HepG2 (cell line): ENCODE measurements at regions of chr15 and their contacts with region 1.

Region 1: DNA sequence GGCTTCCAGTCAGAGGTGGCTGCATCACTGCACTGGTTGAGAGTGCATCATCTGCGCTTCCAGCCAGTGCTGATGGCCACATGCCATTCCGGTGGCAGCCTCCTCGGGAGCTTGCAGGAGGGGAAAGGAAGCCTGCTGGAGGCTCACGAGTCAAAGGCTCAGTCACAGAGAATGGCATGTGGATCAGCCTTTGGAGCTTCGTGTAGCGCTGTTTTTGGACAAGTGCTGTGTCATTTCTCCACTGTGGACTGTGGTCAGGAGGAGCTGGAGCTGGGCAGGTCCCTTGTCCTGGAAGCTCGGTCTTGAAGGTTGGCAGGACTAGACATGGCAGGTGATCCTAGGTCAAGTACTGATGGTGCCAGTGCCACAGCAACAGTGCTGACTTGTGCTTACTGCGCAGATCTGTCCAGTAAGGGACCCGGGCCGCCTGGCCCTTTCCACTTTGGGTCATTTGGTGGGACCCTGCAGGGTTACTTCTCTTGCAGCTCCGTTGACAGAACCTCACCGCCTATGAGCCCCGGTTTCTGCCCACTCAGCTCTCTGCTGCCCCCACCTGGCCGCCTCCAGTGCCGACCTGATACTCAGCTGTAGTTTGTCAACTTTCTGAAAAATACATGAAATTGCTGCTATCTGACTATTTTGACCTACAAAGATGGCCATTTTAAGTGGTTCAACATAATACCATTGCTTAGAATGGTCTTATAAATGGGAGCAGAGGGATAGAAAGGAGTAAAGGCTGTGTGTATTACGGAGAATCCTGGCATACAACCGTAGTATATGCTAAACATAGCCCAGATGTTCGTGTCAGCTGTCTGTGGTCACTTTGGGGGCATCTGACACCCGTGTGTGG is 27.6 kb upstream of the TRPM1 start:
- DNase-seq: peak; percentile 18
- ATAC-seq: peak; percentile 89
- H3K4me3 ChIP-seq: peak overlapping the region in 1 of 3 experiments; percentile 49; a peak in 1 of 6 replicates
- H3K27ac ChIP-seq: no peak overlapping the region
- H3K4me1 ChIP-seq: peaks cover 31% of the 10 kb centered on the region
- H3K27me3 ChIP-seq: peaks cover 0 to 1% of the 10 kb centered on the region in 2 experiments; a peak in 1 of 5 replicates
- CTCF ChIP-seq: peak; percentile 90
- EP300 ChIP-seq: no peak
- POLR2A ChIP-seq: no peak
- RAD21 ChIP-seq: peak; percentile 81

Region 2: DNA sequence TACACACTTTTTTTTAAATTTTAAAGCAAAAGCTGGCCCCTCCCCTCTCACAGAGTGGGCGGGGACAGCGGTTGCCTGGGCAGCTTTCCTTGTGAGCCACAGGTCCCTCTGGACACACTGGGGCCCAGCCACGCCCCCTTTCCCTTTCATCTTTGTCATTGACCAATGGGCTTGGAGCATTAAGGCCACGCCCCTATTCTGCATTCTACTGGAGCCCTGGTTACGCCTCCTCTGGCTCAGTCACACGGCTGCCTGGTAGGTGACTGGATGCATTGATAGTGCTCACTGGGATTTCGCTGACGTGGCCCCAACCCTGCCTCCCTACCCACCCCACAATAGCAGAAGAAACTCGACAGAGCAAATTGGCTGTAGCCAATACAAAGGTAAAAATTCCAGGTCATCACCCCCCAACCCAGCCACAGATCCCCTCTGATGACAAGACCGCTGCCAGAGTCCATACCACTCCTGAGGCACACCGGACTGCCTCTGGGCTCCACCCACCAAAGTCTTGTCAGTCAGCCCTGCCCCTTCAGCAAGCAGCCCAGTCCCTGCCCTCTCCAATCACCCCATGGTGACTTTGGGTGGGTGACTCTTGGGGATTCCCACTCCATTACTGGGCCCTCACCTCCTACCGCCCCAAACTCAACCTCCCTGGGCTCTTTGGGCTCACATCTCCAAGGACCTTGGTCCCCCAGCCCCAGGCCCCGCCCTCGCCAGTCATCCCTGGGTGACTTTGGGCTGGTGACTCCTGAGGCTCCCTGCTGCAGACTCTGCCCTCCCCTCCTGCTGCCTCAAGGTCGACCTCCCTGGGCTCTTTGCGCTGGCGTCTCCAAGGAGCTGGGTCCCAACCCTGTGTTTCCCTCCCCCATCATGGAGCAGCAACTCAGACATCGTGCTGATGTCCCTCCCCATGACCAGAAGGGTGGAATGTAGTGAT is 337.6 kb before region 1 on chr15:
- CTCF ChIA-PET with region 1: no interaction called
- POLR2A ChIA-PET with region 1: no interaction called
- in situ Hi-C with region 1: loop called (anchors 10 kb)
- intact Hi-C with region 1: no loop called
- DNase-seq: no peak
- ATAC-seq: no peak
- H3K4me3 ChIP-seq: no peak overlapping the region
- H3K27ac ChIP-seq: no peak overlapping the region
- H3K4me1 ChIP-seq: no peaks in the 10 kb centered on the region
- H3K27me3 ChIP-seq: no peaks in the 10 kb centered on the region
- CTCF ChIP-seq: no peak
- EP300 ChIP-seq: no peak
- POLR2A ChIP-seq: no peak
- RAD21 ChIP-seq: no peak

Region 3: GRCh38 chr15:30895461-30896210 is 233.5 kb before region 1 on chr15:
- CTCF ChIA-PET with region 1: no interaction called
- POLR2A ChIA-PET with region 1: no interaction called
- in situ Hi-C with region 1: no loop called
- intact Hi-C with region 1: loop called (anchors 2 kb)
- DNase-seq: no peak
- ATAC-seq: no peak
- H3K4me3 ChIP-seq: no peak overlapping the region
- H3K27ac ChIP-seq: no peak overlapping the region
- H3K4me1 ChIP-seq: no peaks in the 10 kb centered on the region
- H3K27me3 ChIP-seq: no peaks in the 10 kb centered on the region
- CTCF ChIP-seq: no peak
- EP300 ChIP-seq: no peak
- POLR2A ChIP-seq: no peak
- RAD21 ChIP-seq: no peak

Region 4: DNA sequence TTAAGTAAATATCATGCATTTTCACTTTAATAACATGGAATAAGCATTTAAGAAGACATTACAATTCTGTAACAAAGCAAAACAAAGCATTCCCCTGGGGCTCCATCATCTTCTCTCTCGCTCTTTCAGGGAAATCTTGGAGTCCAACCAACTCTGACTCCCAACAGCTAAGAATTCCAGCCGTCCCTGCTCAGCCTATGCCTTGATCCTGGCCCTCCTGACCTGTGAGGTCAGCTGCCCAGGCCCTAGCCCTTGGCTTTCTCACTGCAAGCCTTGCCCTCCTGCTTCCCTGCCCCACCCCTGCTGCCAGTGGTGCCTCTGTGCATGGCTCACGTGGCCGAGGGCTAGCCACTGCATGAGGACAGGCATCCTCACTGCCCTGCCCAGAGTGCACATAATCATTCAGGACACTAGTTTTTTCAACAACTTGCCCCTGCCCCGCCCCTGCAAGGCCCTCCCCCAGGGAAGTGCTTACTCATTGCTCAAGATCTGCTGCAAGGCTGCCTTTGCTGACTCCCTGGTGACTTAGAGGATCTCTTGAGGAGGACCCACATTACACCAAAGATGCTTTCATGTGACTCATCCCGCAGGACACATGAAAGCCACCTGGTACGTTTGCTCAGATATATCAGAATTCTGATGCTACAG is 175.3 kb before region 1 on chr15:
- CTCF ChIA-PET with region 1: no interaction called
- POLR2A ChIA-PET with region 1: no interaction called
- in situ Hi-C with region 1: no loop called
- intact Hi-C with region 1: loop called (anchors 5 kb)
- DNase-seq: no peak
- ATAC-seq: no peak
- H3K4me3 ChIP-seq: no peak overlapping the region
- H3K27ac ChIP-seq: no peak overlapping the region
- H3K4me1 ChIP-seq: no peaks in the 10 kb centered on the region
- H3K27me3 ChIP-seq: no peaks in the 10 kb centered on the region
- CTCF ChIP-seq: no peak
- EP300 ChIP-seq: no peak
- POLR2A ChIP-seq: no peak
- RAD21 ChIP-seq: no peak

Region 5: DNA sequence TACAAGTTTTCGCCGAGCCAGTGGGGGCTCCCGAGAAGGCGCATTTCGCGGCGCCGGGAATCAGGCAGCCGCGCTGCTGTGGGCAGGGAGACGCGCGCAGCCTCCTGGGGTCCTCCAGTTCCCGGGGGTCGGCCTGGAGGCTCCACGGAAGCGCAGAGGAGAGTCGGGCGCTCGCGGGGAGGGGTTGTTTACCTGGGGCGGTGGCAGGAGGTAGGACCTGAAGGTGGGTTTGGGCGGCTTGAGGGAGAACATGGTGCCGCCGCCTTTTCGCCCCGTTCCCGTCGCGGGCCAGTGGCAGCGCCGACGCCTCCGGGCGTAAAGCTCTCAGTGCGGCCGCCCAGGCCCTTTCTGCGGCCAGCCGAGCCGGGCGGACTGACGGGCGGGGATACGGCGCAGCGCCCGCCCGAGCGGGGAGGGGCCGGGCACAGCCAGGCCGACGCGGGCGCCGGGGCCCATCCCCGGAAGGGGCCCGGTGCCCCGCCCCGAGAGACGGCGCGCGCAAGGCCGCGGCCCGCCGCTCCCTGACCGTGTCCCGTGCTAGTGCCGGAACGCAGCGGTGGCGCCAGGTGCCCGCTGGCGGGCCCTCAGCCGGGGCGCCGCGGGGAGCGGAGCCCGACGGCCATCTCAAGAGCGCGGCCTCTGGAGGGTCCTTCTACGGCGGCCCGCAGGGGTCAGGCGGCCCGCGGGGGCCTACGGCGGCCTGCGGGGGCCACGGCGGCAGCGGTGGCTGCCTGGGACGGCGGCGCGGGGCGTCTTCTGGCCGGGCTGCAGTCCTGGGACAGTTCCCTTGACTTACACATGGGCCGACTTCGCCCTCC is 137.7 kb before region 1 on chr15 and contains the start of gene MTMR10:
- CTCF ChIA-PET with region 1: no interaction called
- POLR2A ChIA-PET with region 1: interaction called, 11 read pairs
- in situ Hi-C with region 1: loop called (anchors 25 kb)
- intact Hi-C with region 1: loop called (anchors 10 kb)
- DNase-seq: peak; percentile 48
- ATAC-seq: peak; percentile 90
- H3K4me3 ChIP-seq: peak within 1 kb of the TSS; percentile 93 to 98 (median 97)
- H3K27ac ChIP-seq: peak within 1 kb of the TSS; percentile 89
- H3K4me1 ChIP-seq: peaks cover 41% of the 10 kb centered on the region
- H3K27me3 ChIP-seq: no peaks in the 10 kb centered on the region; a peak in 1 of 5 replicates
- CTCF ChIP-seq: no peak
- EP300 ChIP-seq: 0 out of 4 replicates have a peak, but pooled peaks of 1 of the 2 experiments have one; percentile 6
- POLR2A ChIP-seq: peak; percentile 86 to 87
- RAD21 ChIP-seq: peak; percentile 28; the same call in 1 of the 2 replicates
- total RNA-seq, gene MTMR10: 17.4 and 18.6 TPM in 2 replicates

Region 6: DNA sequence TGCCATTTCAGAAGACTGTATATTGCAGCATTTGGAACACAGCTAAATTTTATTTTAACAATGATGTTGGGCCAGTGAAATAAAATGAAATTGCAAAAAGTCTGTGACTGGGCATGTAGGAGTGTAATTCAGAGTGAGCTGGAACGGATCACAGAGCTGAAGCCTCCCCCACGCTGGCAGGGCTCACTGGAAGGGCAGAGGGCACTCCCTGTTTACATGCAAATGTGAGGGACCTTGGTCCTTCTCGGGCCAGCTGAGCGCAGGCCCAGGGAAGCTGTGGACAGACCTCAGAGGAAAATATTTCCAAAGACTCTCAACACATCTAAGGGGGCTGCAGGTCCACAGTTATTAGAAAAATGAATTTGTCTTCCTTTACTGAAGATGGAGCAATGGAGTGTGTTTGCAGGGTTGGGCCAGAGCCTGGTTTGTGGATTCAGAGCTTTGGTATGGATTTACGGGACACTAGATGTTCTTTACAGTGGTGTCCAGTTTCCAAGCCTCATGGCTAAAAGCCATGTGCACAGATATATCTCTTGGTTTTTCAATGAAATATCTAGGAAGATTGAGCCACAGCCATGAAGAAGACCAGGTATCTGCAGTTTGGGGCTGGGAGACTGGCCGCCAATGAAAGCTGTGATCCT is 59.7 kb before region 1 on chr15:
- CTCF ChIA-PET with region 1: no interaction called
- POLR2A ChIA-PET with region 1: no interaction called
- in situ Hi-C with region 1: no loop called
- intact Hi-C with region 1: loop called (anchors 2 kb)
- DNase-seq: peak; percentile 11
- ATAC-seq: peak; percentile 98
- H3K4me3 ChIP-seq: peak overlapping the region in 1 of 3 experiments; percentile 11; a peak in 1 of 6 replicates
- H3K27ac ChIP-seq: no peak overlapping the region
- H3K4me1 ChIP-seq: peaks cover 25% of the 10 kb centered on the region
- H3K27me3 ChIP-seq: no peaks in the 10 kb centered on the region
- CTCF ChIP-seq: 0 out of 2 replicates have a peak, but pooled peaks have one; percentile 6
- EP300 ChIP-seq: no peak
- POLR2A ChIP-seq: no peak
- RAD21 ChIP-seq: no peak